Naive thymus-derived CD4-positive, alpha-beta T cell (primary cell): ENCODE measurements at regions of chr5 and their contacts with region 1.

Region 1: GRCh38 chr5:64612344-64612961 is 77.8 kb upstream of the SHISAL2B start:
- DNase-seq: no peak
- ATAC-seq: no peak
- H3K4me3 ChIP-seq: no peak overlapping the region
- H3K4me3 Mint-ChIP-seq: no peak overlapping the region
- H3K27ac ChIP-seq: no peak overlapping the region
- H3K27ac Mint-ChIP-seq: no peak overlapping the region
- H3K4me1 ChIP-seq: no peaks in the 10 kb centered on the region
- H3K4me1 Mint-ChIP-seq: no peaks in the 10 kb centered on the region
- H3K27me3 ChIP-seq: no peaks in the 10 kb centered on the region
- H3K27me3 Mint-ChIP-seq: peaks cover 15 to 40% (median 22%) of the 10 kb centered on the region in 5 donors

Region 2: DNA sequence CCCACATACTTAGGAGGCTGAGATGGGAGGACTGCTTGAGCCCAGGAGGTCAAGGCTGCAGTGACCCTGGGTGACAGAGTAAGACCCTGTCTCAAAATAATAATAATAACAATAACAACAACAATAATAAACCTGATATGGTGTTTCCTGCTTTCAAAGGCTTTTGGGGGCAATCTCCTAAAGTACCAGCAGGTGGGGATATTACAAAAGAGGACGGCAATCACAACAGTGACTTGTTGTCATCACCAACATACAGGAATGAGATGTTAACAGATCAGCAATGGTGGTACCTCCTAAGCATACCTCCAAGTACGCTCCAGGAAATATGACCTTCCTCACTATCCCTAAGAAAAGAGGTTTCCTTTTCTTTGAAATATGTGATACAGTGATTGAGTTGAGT is 537.9 kb before region 1 on chr5:
- CTCF ChIA-PET with region 1: no interaction called
- POLR2A ChIA-PET with region 1: no interaction called
- intact Hi-C with region 1: loop called in 1 of 2 experiments (anchors 5 kb)
- DNase-seq: no peak
- ATAC-seq: no peak
- H3K4me3 ChIP-seq: no peak overlapping the region
- H3K4me3 Mint-ChIP-seq: no peak overlapping the region
- H3K27ac ChIP-seq: no peak overlapping the region
- H3K27ac Mint-ChIP-seq: no peak overlapping the region
- H3K4me1 ChIP-seq: no peaks in the 10 kb centered on the region
- H3K4me1 Mint-ChIP-seq: no peaks in the 10 kb centered on the region
- H3K27me3 ChIP-seq: no peaks in the 10 kb centered on the region
- H3K27me3 Mint-ChIP-seq: no peaks in the 10 kb centered on the region